ENCODE measurements at regions of chr5 and their contacts with region 1.

Region 1: DNA sequence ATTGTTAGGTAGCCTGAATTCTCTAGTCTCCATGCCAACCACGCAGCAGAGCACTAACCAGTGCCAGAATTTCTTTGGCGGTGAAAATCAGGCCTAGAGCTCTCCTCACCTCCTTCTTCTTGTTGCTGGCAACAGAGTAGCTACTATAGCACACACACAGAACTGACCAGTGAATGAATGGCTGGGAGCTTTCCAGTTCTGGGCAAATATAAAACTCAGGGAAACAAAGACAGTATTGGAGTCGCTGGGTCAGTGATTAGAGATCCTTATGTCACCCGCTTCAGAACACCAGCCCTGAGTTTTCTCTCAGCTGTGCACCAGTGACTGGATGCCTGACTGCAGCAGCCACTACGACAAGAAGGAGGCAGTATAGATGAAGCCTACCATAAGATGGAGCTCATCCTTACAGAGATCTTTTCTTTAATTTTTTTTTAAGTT is 26.9 kb upstream of the FEM1C start:
- DNase-seq: no peak
- ATAC-seq: no peak
- H3K4me3 ChIP-seq: no peak overlapping the region
- H3K4me3 Mint-ChIP-seq: no peak overlapping the region
- H3K27ac ChIP-seq: no peak overlapping the region
- H3K27ac Mint-ChIP-seq: no peak overlapping the region
- H3K4me1 ChIP-seq: no peaks in the 10 kb centered on the region
- H3K4me1 Mint-ChIP-seq: peaks cover 0 to 2% (median 0%) of the 10 kb centered on the region in 7 donors
- H3K27me3 ChIP-seq: no peaks in the 10 kb centered on the region
- H3K27me3 Mint-ChIP-seq: peaks cover 0 to 26% (median under 1%) of the 10 kb centered on the region in 5 donors

Region 2: GRCh38 chr5:115530426-115530825 is 41.0 kb before region 1 on chr5:
- CTCF ChIA-PET with region 1: interaction called, 3 read pairs
- POLR2A ChIA-PET with region 1: no interaction called
- intact Hi-C with region 1: loop called in 1 of 2 experiments (anchors 1 kb)
- DNase-seq: no peak
- ATAC-seq: no peak
- H3K4me3 ChIP-seq: no peak overlapping the region
- H3K4me3 Mint-ChIP-seq: no peak overlapping the region
- H3K27ac ChIP-seq: no peak overlapping the region
- H3K27ac Mint-ChIP-seq: no peak overlapping the region
- H3K4me1 ChIP-seq: peaks cover 1 to 10% of the 10 kb centered on the region in 2 donors
- H3K4me1 Mint-ChIP-seq: peaks cover 30 to 90% (median 76%) of the 10 kb centered on the region in 7 donors
- H3K27me3 ChIP-seq: no peaks in the 10 kb centered on the region
- H3K27me3 Mint-ChIP-seq: no peaks in the 10 kb centered on the region

Region 3: GRCh38 chr5:115625579-115626444 is 54.4 kb after region 1 on chr5 and contains the start of gene TMED7:
- CTCF ChIA-PET with region 1: no interaction called
- POLR2A ChIA-PET with region 1: no interaction called
- intact Hi-C with region 1: no loop called
- DNase-seq: peak; percentile 98 to 100 (median 99)
- ATAC-seq: peak; percentile 97
- H3K4me3 ChIP-seq: peak within 1 kb of the TSS; percentile 93
- H3K4me3 Mint-ChIP-seq: no peak within 1 kb of the TSS
- H3K27ac ChIP-seq: peak within 1 kb of the TSS; percentile 96
- H3K27ac Mint-ChIP-seq: peak within 1 kb of the TSS in 5 of 9 donors; percentile 93 to 98 (median 98)
- H3K4me1 ChIP-seq: peaks cover 20 to 35% of the 10 kb centered on the region in 2 donors
- H3K4me1 Mint-ChIP-seq: peaks cover 11 to 37% (median 27%) of the 10 kb centered on the region in 7 donors
- H3K27me3 ChIP-seq: no peaks in the 10 kb centered on the region
- H3K27me3 Mint-ChIP-seq: peaks cover 0 to 6% (median 0%) of the 10 kb centered on the region in 5 donors
- total RNA-seq, gene TMED7: 41.7 to 58.0 (median 47.5) TPM

Measured in naive thymus-derived CD4-positive, alpha-beta T cell (primary cell).